ENCODE measurements at regions of chrX and their contacts with region 1.

Region 1: DNA sequence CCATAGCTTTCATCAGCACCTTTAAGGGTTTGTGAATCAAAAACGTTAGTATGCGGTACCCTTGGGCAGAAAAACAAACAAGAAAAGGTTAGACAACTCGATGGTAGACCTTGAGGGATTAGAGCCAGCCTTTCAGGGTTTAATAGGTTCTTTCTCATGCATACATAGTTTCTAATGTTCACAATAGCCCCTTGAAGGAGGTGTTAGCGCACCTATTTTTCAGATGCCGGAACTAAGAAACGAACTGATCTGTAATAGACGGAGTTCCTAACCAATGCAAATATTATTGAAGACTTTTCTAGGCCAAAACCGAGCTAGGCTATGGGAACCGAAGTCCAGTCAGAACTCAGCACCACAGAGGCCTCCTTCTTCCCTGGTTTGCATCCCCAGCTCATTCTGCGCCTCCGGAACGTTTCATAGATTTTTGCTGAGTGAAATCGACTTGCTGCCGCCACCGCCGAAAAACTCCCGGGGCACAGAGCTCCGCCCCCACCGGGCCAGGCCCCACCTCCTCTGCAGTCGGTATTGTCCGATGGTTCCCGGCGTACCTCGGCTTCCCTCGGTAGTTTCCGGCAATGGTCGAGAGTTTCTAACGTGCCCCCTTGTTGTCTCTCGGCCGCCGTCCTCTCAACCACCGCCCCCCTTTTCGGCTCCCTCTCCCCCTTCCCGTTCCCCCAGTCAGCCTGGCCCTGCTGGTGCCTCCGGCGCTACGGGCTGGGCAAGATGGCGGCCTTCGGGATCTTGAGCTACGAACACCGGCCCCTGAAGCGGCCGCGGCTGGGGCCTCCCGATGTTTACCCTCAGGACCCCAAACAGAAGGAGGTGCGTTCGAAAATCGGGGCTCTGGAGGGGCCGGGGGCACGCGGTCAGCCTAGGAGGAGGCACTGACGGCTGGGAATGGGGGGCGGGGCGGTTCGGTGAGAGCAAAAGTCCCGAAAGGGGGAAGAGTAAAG is at the start of gene MED12:
- DNase-seq: peak; percentile 76
- H3K4me3 ChIP-seq: peak within 1 kb of the TSS; percentile 53 to 79 (median 78)
- H3K27ac ChIP-seq: peak within 1 kb of the TSS; percentile 59
- H3K4me1 ChIP-seq: peaks cover 5% of the 10 kb centered on the region
- H3K27me3 ChIP-seq: peaks cover 0 to 3% of the 10 kb centered on the region in 2 experiments
- CTCF ChIP-seq: no peak
- POLR2A ChIP-seq: peak; percentile 66
- total RNA-seq, gene MED12: 61.4 and 65.3 TPM in 2 replicates

Region 2: GRCh38 chrX:70978928-70979762 is 139.2 kb before region 1 on chrX:
- CTCF ChIA-PET with region 1: no interaction called
- POLR2A ChIA-PET with region 1: no interaction called
- dilution Hi-C with region 1: no loop called
- intact Hi-C with region 1: no loop called
- DNase-seq: peak; percentile 6
- H3K4me3 ChIP-seq: no peak overlapping the region
- H3K27ac ChIP-seq: no peak overlapping the region
- H3K4me1 ChIP-seq: no peaks in the 10 kb centered on the region
- H3K27me3 ChIP-seq: no peaks in the 10 kb centered on the region
- CTCF ChIP-seq: peak; percentile 9 to 31
- POLR2A ChIP-seq: no peak

Region 3: GRCh38 chrX:70998411-70999027 is 119.8 kb before region 1 on chrX:
- CTCF ChIA-PET with region 1: no interaction called
- POLR2A ChIA-PET with region 1: no interaction called
- dilution Hi-C with region 1: no loop called
- intact Hi-C with region 1: loop called (anchors 10 kb)
- DNase-seq: peak; percentile 9
- H3K4me3 ChIP-seq: no peak overlapping the region
- H3K27ac ChIP-seq: no peak overlapping the region
- H3K4me1 ChIP-seq: no peaks in the 10 kb centered on the region
- H3K27me3 ChIP-seq: peaks cover 0 to 2% of the 10 kb centered on the region in 2 experiments
- CTCF ChIP-seq: peak in 1 of 2 donors; percentile 8
- POLR2A ChIP-seq: no peak

Region 4: DNA sequence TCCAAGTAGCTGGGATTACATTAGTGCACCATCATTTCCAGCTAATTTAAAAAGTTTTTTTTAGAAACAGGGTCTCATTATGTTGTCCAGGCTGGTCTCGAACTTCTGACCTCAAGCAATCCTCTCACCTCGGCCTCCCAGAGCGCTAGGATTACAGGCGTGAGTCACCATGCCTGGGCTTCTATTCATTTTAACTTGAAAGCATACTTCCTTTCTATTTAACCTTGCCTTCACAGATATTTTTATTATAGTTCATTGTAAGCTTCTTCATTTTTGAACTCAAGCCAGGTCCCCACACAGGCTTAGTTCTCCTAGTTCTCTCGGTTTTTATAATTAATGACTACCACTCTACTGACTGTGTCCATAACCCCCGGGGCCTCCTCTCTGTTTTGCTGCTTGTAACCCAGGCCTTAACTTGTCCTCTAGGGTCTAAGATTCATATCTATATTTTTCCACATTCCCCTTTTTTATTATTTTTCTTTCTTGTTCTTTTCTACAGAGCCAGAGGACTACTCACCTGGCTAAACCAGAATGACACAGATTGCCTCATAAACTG is 100.8 kb before region 1 on chrX:
- CTCF ChIA-PET with region 1: no interaction called
- POLR2A ChIA-PET with region 1: no interaction called
- dilution Hi-C with region 1: no loop called
- intact Hi-C with region 1: no loop called
- DNase-seq: peak; percentile 28
- H3K4me3 ChIP-seq: no peak overlapping the region
- H3K27ac ChIP-seq: no peak overlapping the region
- H3K4me1 ChIP-seq: no peaks in the 10 kb centered on the region
- H3K27me3 ChIP-seq: no peaks in the 10 kb centered on the region
- CTCF ChIP-seq: no peak
- POLR2A ChIP-seq: no peak

Region 5: GRCh38 chrX:71068049-71068763 is 50.1 kb before region 1 on chrX and contains the start of gene SNX12:
- CTCF ChIA-PET with region 1: no interaction called
- POLR2A ChIA-PET with region 1: no interaction called
- dilution Hi-C with region 1: no loop called
- intact Hi-C with region 1: loop called (anchors 1 kb)
- DNase-seq: peak; percentile 94
- H3K4me3 ChIP-seq: peak within 1 kb of the TSS; percentile 79 to 97 (median 97)
- H3K27ac ChIP-seq: peak within 1 kb of the TSS; percentile 57
- H3K4me1 ChIP-seq: no peaks in the 10 kb centered on the region
- H3K27me3 ChIP-seq: no peaks in the 10 kb centered on the region
- CTCF ChIP-seq: no peak
- POLR2A ChIP-seq: peak; percentile 74
- total RNA-seq, gene SNX12: 85.5 and 90.6 TPM in 2 replicates

Region 6: DNA sequence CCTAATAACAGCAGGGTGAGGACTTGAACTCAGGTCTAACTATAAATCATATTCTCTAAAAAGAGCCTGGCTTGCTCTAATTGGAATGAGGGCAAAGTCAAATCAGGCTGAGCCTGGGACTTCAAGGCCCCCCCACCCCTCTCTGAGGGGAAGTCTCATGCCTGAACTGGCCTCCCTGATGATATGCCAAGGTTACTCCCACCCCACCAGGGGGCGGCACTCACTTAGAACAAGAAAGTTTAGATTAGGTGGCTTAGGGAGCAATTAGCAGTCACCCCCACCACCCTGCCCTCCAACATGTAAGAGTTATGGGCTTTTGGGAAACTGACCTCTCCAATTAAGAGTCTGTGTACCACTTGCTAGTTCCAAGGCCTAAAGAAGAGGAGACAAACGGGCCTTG is 20.0 kb before region 1 on chrX:
- CTCF ChIA-PET with region 1: interaction called, 8 read pairs
- POLR2A ChIA-PET with region 1: no interaction called
- dilution Hi-C with region 1: no loop called
- intact Hi-C with region 1: loop called (anchors 1 kb)
- DNase-seq: peak; percentile 53
- H3K4me3 ChIP-seq: no peak overlapping the region
- H3K27ac ChIP-seq: no peak overlapping the region
- H3K4me1 ChIP-seq: peaks cover 6% of the 10 kb centered on the region
- H3K27me3 ChIP-seq: peaks cover 0 to 1% of the 10 kb centered on the region in 2 experiments
- CTCF ChIP-seq: peak; percentile 41 to 49
- POLR2A ChIP-seq: no peak

Region 7: GRCh38 chrX:71151920-71152319 is 33.6 kb after region 1 on chrX:
- CTCF ChIA-PET with region 1: no interaction called
- POLR2A ChIA-PET with region 1: no interaction called
- dilution Hi-C with region 1: no loop called
- intact Hi-C with region 1: no loop called
- DNase-seq: no peak
- H3K4me3 ChIP-seq: no peak overlapping the region
- H3K27ac ChIP-seq: no peak overlapping the region
- H3K4me1 ChIP-seq: no peaks in the 10 kb centered on the region
- H3K27me3 ChIP-seq: no peaks in the 10 kb centered on the region
- CTCF ChIP-seq: no peak
- POLR2A ChIP-seq: no peak

Region 8: DNA sequence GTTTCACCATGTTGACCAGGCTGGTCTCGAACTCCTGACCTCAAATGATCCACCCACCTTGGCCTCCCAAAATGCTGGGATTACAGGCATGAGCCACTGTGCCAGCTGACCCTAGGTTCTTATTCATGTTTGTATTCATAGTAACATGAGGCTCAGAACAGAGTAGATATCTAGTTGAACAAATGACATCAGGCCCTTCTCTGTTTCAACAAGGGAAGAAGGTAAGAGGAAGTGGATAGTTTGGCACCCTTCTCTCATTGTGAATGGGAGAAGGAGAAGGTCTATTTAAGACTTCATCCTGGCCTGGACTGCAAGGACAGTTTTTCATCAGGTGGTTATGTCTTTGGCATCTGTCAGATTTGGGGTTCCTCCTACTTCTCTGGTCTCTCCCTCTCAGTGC is 118.5 kb after region 1 on chrX:
- CTCF ChIA-PET with region 1: no interaction called
- POLR2A ChIA-PET with region 1: no interaction called
- dilution Hi-C with region 1: no loop called
- intact Hi-C with region 1: no loop called
- DNase-seq: no peak
- H3K4me3 ChIP-seq: no peak overlapping the region
- H3K27ac ChIP-seq: no peak overlapping the region
- H3K4me1 ChIP-seq: no peaks in the 10 kb centered on the region
- H3K27me3 ChIP-seq: no peaks in the 10 kb centered on the region
- CTCF ChIP-seq: no peak
- POLR2A ChIP-seq: no peak